Dorsolateral prefrontal cortex (tissue), 120 donors: ENCODE measurements at regions of chr19 and their contacts with region 1.

Region 1: GRCh38 chr19:16324384-16325160 is at the start of gene KLF2:
- DNase-seq: peak; percentile 39 to 85 (median 63)
- H3K4me3 ChIP-seq: peak within 1 kb of the TSS; percentile 34 to 76 (median 65)
- H3K27ac ChIP-seq: peak within 1 kb of the TSS in 54 of 59 donors; percentile 33 to 94 (median 83)
- H3K27me3 ChIP-seq: peaks cover 0 to 11% (median 0%) of the 10 kb centered on the region in 45 donors
- CTCF ChIP-seq: peak in 2 of 56 donors; percentile 3 to 4
- total RNA-seq, gene KLF2: 5.2 to 50.8 (median 15.6) TPM

Region 2: GRCh38 chr19:16252459-16253205 is 71.9 kb before region 1 on chr19:
- intact Hi-C with region 1: loop called in 1 of 2 experiments (anchors 5 kb)
- DNase-seq: peak in 1 of 10 donors; percentile 33
- H3K4me3 ChIP-seq: no peak overlapping the region
- H3K27ac ChIP-seq: peak overlapping the region in 1 of 59 donors; percentile 65
- H3K27me3 ChIP-seq: no peaks in the 10 kb centered on the region
- CTCF ChIP-seq: no peak

Region 3: DNA sequence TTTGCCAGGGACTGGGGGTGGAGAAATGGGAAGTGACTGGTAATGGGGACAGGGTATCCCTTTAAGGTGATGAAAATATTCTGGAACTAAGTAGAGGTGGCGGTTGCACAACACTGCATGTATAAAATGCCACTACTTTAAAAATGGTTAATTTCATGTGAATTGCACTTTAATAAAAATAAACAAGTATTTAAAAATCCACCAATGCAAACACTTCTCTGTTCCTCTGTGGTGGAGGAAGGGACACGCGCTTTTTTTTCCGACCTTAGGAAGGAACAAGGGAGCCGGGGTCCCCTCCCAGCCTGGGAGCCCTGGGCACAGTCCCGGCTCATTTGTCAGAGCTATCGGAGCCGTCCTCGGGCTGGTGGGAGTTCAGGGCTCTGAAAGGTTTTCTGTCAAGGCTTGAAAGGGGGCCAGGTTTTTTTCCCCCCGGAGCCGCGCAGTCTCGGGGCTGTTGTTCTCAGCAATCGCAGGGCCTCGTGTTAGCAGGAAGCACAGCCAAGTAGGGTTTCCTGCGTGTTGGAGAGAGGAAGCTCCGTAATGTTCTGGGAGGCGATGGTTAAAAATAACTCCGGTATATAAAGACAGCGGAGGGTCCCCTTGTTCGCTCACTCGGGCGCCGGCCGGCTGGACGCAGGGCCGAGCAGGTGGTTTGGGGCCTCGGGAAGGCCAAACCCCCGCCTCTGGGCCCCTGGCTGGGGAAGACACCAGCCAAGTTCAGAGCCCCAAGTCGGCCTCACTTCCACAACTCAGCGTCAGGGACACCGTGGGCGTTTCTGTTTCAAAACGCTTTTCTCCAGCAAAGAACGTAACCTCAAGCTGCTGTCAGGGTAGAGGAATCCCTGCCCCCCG is 41.1 kb before region 1 on chr19:
- intact Hi-C with region 1: loop called in 1 of 2 experiments (anchors 5 kb)
- DNase-seq: peak; percentile 16 to 72 (median 62)
- H3K4me3 ChIP-seq: peak overlapping the region in 55 of 59 donors; percentile 0 to 60 (median 36)
- H3K27ac ChIP-seq: peak overlapping the region; percentile 23 to 98 (median 92)
- H3K27me3 ChIP-seq: peaks cover 0 to 29% (median 0%) of the 10 kb centered on the region in 45 donors
- CTCF ChIP-seq: no peak

Region 4: GRCh38 chr19:16509141-16510061 is 184.8 kb after region 1 on chr19:
- intact Hi-C with region 1: no loop called
- DNase-seq: peak; percentile 32 to 79 (median 66)
- H3K4me3 ChIP-seq: peak overlapping the region in 10 of 59 donors; percentile 2 to 27 (median 12)
- H3K27ac ChIP-seq: peak overlapping the region in 49 of 59 donors; percentile 1 to 83 (median 53)
- H3K27me3 ChIP-seq: no peaks in the 10 kb centered on the region
- CTCF ChIP-seq: no peak